GM12878 (cell line): ENCODE measurements at regions of chr1 and their contacts with region 1.

Region 1: DNA sequence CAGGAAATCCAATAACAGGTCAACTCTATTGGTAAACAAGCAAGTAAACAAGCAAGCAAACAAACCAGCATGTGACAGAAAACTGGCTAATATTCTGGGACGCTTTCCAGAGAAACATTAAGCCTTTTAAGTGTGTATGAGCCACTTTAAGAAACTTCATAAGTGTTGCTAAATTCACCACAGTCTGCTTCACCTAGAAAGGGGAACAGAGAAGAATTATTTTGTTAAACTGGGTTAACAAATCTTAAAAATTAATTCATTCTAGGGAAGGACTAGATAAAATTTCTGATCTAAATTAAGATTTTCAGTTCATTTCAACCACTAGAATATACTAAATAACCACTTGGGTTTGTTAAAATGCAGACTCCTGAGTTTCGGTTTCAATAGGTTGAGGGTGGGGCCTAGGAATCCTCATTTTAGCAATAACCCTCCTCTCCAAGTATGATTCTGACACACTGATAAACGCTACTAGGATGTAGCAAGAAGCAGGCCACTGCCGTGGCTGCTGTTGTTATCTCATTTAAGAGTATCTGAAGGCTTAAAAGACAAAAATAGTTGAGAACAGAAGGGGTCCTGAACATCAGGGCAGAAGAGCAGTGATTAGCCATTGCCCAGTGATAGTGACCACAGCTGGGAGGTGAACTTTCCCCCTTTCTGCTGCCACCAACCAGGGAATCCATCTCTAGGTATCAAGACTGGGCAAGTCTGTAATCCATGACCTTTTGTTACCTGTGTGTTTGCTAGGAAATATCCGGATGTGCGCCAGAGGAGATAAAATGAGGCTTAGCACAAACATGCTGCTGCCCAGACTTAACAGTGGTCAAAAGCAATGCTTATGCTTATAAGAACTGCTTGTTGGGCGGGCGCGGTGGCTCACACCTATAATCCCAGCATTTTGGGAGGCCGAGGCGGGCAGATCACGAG is 11.2 kb downstream of the CREG1 start:
- DNase-seq: no peak
- ATAC-seq: peak; percentile 32
- H3K4me3 ChIP-seq: peak overlapping the region; percentile 23; the same call in 1 of the 2 replicates
- H3K27ac ChIP-seq: peak overlapping the region; percentile 45; the same call in 1 of the 2 replicates
- H3K4me1 ChIP-seq: peaks cover 59% of the 10 kb centered on the region
- H3K27me3 ChIP-seq: no peaks in the 10 kb centered on the region
- CTCF ChIP-seq: no peak
- EP300 ChIP-seq: no peak
- POLR2A ChIP-seq: no peak
- RAD21 ChIP-seq: no peak

Region 2: GRCh38 chr1:167454894-167455785 is 87.2 kb before region 1 on chr1:
- CTCF ChIA-PET with region 1: interaction called, 9 read pairs
- POLR2A ChIA-PET with region 1: no interaction called
- RAD21 ChIA-PET with region 1: interaction called, 12 read pairs
- SMC1A ChIA-PET with region 1: interaction called, 12 read pairs
- in situ Hi-C with region 1: no loop called
- intact Hi-C with region 1: no loop called
- DNase-seq: no peak
- ATAC-seq: peak; percentile 79
- H3K4me3 ChIP-seq: peak overlapping the region; percentile 80
- H3K27ac ChIP-seq: peak overlapping the region; percentile 20; the same call in 1 of the 2 replicates
- H3K4me1 ChIP-seq: peaks cover 5% of the 10 kb centered on the region
- H3K27me3 ChIP-seq: no peaks in the 10 kb centered on the region
- CTCF ChIP-seq: no peak
- EP300 ChIP-seq: no peak; a peak in 1 of 4 replicates
- POLR2A ChIP-seq: peak; percentile 37
- RAD21 ChIP-seq: no peak

Region 3: GRCh38 chr1:167499664-167500101 is 42.7 kb before region 1 on chr1:
- CTCF ChIA-PET with region 1: interaction called, 22 read pairs
- POLR2A ChIA-PET with region 1: no interaction called
- RAD21 ChIA-PET with region 1: no interaction called
- SMC1A ChIA-PET with region 1: no interaction called
- in situ Hi-C with region 1: no loop called
- intact Hi-C with region 1: no loop called
- DNase-seq: peak; percentile 84
- ATAC-seq: peak; percentile 97
- H3K4me3 ChIP-seq: no peak overlapping the region
- H3K27ac ChIP-seq: peak overlapping the region; percentile 27; the same call in 1 of the 2 replicates
- H3K4me1 ChIP-seq: peaks cover 32% of the 10 kb centered on the region
- H3K27me3 ChIP-seq: 0 out of 4 replicates have a peak, but pooled peaks cover 0 to 3% of the 10 kb centered on the region in 2 experiments
- CTCF ChIP-seq: no peak
- EP300 ChIP-seq: peak in 1 of 2 experiments; percentile 92; a peak in 2 of 4 replicates
- POLR2A ChIP-seq: no peak
- RAD21 ChIP-seq: no peak

Region 4: GRCh38 chr1:167524651-167525050 is 17.7 kb before region 1 on chr1:
- CTCF ChIA-PET with region 1: interaction called, 18 read pairs
- POLR2A ChIA-PET with region 1: no interaction called
- RAD21 ChIA-PET with region 1: no interaction called
- SMC1A ChIA-PET with region 1: interaction called, 5 read pairs
- in situ Hi-C with region 1: no loop called
- intact Hi-C with region 1: no loop called
- DNase-seq: no peak
- ATAC-seq: no peak
- H3K4me3 ChIP-seq: no peak overlapping the region
- H3K27ac ChIP-seq: no peak overlapping the region
- H3K4me1 ChIP-seq: no peaks in the 10 kb centered on the region
- H3K27me3 ChIP-seq: peaks cover 0 to 3% of the 10 kb centered on the region in 2 experiments; a peak in 1 of 4 replicates
- CTCF ChIP-seq: no peak
- EP300 ChIP-seq: no peak
- POLR2A ChIP-seq: no peak
- RAD21 ChIP-seq: no peak

Region 5: GRCh38 chr1:167553136-167554027 is 11.0 kb after region 1 on chr1 and contains the start of gene CREG1:
- CTCF ChIA-PET with region 1: interaction called, 262 read pairs
- POLR2A ChIA-PET with region 1: interaction called, 10 read pairs
- RAD21 ChIA-PET with region 1: interaction called, 70 read pairs
- SMC1A ChIA-PET with region 1: interaction called, 83 read pairs
- in situ Hi-C with region 1: no loop called
- intact Hi-C with region 1: no loop called
- DNase-seq: no peak
- ATAC-seq: peak; percentile 97
- H3K4me3 ChIP-seq: peak within 1 kb of the TSS; percentile 72
- H3K27ac ChIP-seq: peak within 1 kb of the TSS; percentile 51
- H3K4me1 ChIP-seq: peaks cover 9% of the 10 kb centered on the region
- H3K27me3 ChIP-seq: no peaks in the 10 kb centered on the region
- CTCF ChIP-seq: no peak
- EP300 ChIP-seq: no peak
- POLR2A ChIP-seq: peak; percentile 93
- RAD21 ChIP-seq: no peak
- polyA plus RNA-seq, gene CREG1: 5.3 to 11.3 TPM

Region 6: DNA sequence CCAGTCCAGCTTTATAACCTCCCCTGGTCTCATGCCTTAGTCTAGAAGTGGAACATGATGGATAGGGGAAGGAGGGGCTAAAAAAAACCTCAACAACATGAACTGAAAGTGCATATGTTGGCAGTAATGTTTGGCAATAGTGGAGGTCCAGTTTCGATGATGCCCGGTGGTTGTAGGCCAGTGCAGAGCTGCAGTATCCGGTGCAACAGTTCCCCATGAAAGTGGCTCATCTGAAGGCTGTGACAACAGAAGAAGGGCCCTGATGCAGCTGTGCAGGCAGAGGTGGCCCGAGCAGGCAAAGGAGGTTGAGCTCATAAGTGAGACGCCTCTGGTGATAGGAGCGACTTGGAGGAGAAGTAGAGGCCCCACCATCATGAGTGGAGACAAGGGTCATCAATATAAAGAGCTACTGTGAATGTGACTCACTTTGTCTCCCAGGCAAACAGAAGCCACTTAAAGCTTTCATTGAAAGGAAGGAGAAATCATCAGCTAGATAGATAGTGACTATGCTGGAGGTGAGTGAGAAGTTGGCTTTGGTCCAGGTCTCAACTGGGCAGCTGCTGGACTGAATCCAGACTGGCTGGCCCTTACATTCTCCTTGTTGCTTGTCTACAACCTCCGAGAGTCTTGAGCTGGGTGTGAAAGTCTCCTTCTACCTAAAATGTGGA is 21.3 kb after region 1 on chr1:
- CTCF ChIA-PET with region 1: interaction called, 262 read pairs
- POLR2A ChIA-PET with region 1: no interaction called
- RAD21 ChIA-PET with region 1: interaction called, 13 read pairs
- SMC1A ChIA-PET with region 1: interaction called, 33 read pairs
- in situ Hi-C with region 1: no loop called
- intact Hi-C with region 1: no loop called
- DNase-seq: no peak
- ATAC-seq: peak; percentile 21; the same call in 2 of the 3 replicates
- H3K4me3 ChIP-seq: no peak overlapping the region
- H3K27ac ChIP-seq: no peak overlapping the region
- H3K4me1 ChIP-seq: peaks cover 8% of the 10 kb centered on the region; the same call in 1 of the 2 replicates
- H3K27me3 ChIP-seq: no peaks in the 10 kb centered on the region
- CTCF ChIP-seq: no peak
- EP300 ChIP-seq: no peak
- POLR2A ChIP-seq: no peak
- RAD21 ChIP-seq: no peak

Region 7: DNA sequence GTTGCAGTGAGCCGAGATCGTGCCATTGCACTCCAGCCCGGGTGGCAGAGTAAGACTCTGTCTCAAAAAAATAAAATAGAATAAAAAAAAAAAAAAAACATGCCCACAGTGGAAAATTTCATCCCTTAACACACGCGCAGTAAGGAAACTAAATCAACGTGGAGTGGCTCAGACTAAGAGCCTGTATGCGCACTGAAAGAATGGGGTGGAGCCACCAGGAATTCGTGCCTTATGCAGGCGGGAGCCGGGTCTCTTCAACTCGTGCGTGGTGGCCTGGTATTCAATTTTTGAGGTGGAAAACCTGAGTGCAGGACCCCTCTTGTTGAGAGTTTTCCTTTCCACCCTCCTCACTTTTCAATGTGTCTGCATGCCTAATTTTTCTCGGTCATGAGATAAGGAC is 33.3 kb after region 1 on chr1:
- CTCF ChIA-PET with region 1: no interaction called
- POLR2A ChIA-PET with region 1: no interaction called
- RAD21 ChIA-PET with region 1: no interaction called
- SMC1A ChIA-PET with region 1: no interaction called
- in situ Hi-C with region 1: no loop called
- intact Hi-C with region 1: no loop called
- DNase-seq: no peak
- ATAC-seq: no peak
- H3K4me3 ChIP-seq: no peak overlapping the region
- H3K27ac ChIP-seq: no peak overlapping the region
- H3K4me1 ChIP-seq: no peaks in the 10 kb centered on the region
- H3K27me3 ChIP-seq: 0 out of 4 replicates have a peak, but pooled peaks cover 0 to 1% of the 10 kb centered on the region in 2 experiments
- CTCF ChIP-seq: no peak
- EP300 ChIP-seq: no peak
- POLR2A ChIP-seq: no peak
- RAD21 ChIP-seq: no peak